B cell (primary cell): ENCODE measurements at regions of chr9 and their contacts with region 1.

Region 1: GRCh38 chr9:68779558-68780384 is 74.7 kb downstream of the PIP5K1B start:
- DNase-seq: peak; percentile 98
- ATAC-seq: peak; percentile 91
- H3K4me3 ChIP-seq: peak overlapping the region; percentile 61 to 92 (median 87)
- H3K4me3 Mint-ChIP-seq: no peak overlapping the region
- H3K27ac ChIP-seq: peak overlapping the region; percentile 91 to 95
- H3K27ac Mint-ChIP-seq: no peak overlapping the region
- H3K4me1 ChIP-seq: peaks cover 29 to 43% of the 10 kb centered on the region in 2 donors
- H3K4me1 Mint-ChIP-seq: peaks cover 9% of the 10 kb centered on the region
- H3K27me3 ChIP-seq: no peaks in the 10 kb centered on the region
- H3K27me3 Mint-ChIP-seq: no peaks in the 10 kb centered on the region
- CTCF ChIP-seq: peak; percentile 66

Region 2: GRCh38 chr9:68546596-68547390 is 233.0 kb before region 1 on chr9:
- CTCF ChIA-PET with region 1: no interaction called
- POLR2A ChIA-PET with region 1: no interaction called
- intact Hi-C with region 1: no loop called
- DNase-seq: peak; percentile 67
- ATAC-seq: peak; percentile 82
- H3K4me3 ChIP-seq: peak overlapping the region in 4 of 5 experiments; percentile 10 to 47 (median 16)
- H3K4me3 Mint-ChIP-seq: peak overlapping the region; percentile 76
- H3K27ac ChIP-seq: peak overlapping the region; percentile 56 to 72
- H3K27ac Mint-ChIP-seq: peak overlapping the region; percentile 80
- H3K4me1 ChIP-seq: peaks cover 30% of the 10 kb centered on the region in 2 donors
- H3K4me1 Mint-ChIP-seq: peaks cover 42% of the 10 kb centered on the region
- H3K27me3 ChIP-seq: no peaks in the 10 kb centered on the region
- H3K27me3 Mint-ChIP-seq: no peaks in the 10 kb centered on the region
- CTCF ChIP-seq: no peak

Region 3: DNA sequence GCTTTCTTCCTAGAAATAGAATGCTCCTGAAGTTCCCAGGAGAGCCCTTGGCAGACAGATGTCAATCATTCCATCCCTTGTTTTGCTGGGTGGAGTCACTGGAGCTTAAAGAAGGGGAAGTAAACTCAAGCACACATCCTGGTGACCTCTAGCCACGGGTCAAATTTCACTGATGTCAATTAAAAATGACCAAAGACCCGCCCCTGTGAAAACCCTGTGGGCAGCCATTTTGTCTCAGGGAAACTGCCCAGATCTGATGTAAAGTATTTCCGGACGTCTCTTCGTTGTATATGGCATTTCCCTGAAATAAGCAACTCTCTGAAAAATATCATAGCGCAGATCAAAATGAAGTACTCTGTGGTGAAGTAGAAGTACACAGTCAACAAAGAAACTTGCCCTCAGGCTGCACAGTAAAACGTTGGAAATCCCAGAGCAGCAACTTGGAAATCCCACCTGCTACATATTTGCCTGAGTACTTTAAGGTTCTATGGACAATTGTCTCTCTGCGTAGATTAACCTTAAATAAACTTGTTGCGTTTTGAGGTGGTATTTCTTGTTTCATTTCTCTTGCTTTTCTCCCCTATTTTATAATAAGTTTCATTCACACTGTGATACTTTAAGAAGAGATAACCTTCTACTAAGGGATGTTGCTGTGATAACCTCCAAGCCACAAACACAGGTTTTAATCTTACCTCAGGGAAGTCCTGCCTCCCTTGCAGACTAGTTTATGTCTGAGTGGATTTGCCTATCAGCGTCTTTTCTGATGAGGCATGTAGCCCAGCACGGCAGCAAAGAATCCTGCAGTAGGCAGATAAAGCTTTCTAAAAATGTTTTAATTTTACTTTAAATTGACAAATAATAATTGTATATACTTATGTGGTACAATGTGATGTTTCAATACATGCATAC is 135.6 kb before region 1 on chr9:
- CTCF ChIA-PET with region 1: interaction called, 5 read pairs
- POLR2A ChIA-PET with region 1: interaction called, 4 read pairs
- intact Hi-C with region 1: loop called (anchors 2 kb)
- DNase-seq: peak; percentile 83
- ATAC-seq: peak; percentile 61
- H3K4me3 ChIP-seq: peak overlapping the region in 1 of 5 experiments; percentile 42
- H3K4me3 Mint-ChIP-seq: peak overlapping the region; percentile 70
- H3K27ac ChIP-seq: peak overlapping the region; percentile 91 to 97
- H3K27ac Mint-ChIP-seq: peak overlapping the region; percentile 91
- H3K4me1 ChIP-seq: peaks cover 83 to 91% of the 10 kb centered on the region in 2 donors
- H3K4me1 Mint-ChIP-seq: peaks cover 89% of the 10 kb centered on the region
- H3K27me3 ChIP-seq: no peaks in the 10 kb centered on the region
- H3K27me3 Mint-ChIP-seq: no peaks in the 10 kb centered on the region
- CTCF ChIP-seq: no peak

Region 4: DNA sequence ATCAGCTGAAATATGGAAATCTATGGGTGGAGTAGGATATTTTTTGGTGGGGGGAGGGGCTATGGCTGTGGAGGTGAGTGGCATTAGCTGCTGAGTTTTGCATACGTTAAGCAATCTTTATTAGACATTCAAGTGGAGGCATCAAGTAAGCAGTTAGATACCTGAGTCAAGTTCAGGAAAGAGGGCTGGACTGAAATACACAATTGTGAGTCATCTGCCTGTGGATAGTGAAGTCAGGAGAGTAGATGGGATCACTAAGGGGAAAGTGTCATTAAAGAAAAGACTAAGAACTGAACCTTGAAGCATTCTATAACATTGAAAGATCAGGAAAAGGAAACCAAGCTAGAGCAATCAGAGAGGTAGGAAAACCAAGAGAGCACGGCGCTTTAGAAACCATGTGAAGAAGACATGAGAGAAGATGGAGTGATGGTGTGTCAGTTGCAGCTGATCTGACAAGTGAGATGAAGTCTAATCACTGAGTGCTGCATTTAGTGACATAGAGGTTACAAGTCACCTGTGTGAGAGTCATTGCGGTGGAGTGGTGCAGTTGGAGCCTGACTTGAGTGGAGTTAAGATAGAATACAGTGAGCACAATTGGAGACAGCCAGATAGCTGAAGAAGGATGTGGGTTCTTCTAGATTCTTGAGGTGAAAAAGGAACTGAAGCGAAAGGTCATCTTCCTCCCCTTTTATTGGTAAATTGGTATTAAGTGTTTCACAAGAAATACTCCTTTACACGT is 14.0 kb after region 1 on chr9:
- CTCF ChIA-PET with region 1: interaction called, 5 read pairs
- POLR2A ChIA-PET with region 1: no interaction called
- intact Hi-C with region 1: loop called (anchors 2 kb)
- DNase-seq: peak; percentile 30
- ATAC-seq: peak; percentile 67
- H3K4me3 ChIP-seq: no peak overlapping the region
- H3K4me3 Mint-ChIP-seq: no peak overlapping the region
- H3K27ac ChIP-seq: peak overlapping the region in 1 of 2 donors; percentile 6
- H3K27ac Mint-ChIP-seq: no peak overlapping the region
- H3K4me1 ChIP-seq: peaks cover 21 to 34% of the 10 kb centered on the region in 2 donors
- H3K4me1 Mint-ChIP-seq: peaks cover 26% of the 10 kb centered on the region
- H3K27me3 ChIP-seq: no peaks in the 10 kb centered on the region
- H3K27me3 Mint-ChIP-seq: no peaks in the 10 kb centered on the region
- CTCF ChIP-seq: no peak

Region 5: DNA sequence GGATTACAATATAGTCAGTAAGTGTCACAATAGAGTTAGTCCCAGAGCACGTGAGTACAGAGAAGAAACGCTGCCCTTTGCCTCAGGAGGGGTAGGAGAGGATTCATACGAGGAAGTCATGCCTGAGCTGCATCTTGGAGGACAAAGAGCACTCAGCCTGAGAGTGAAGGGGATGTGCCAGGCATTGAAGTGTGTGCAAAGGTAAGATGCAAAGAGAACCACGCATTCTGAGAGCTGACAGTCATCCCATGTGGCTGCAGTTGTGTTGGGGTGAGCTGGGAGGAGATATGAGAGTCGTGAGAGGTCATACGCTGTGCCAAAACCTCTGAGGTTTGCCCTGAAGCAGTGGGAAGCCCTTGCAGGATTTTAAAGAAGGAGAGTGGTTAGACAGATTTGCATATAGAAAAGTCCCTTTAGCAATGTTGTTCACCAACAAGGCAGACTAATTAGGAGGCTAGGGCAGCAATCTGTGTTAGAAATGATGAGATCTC is 22.8 kb after region 1 on chr9:
- CTCF ChIA-PET with region 1: interaction called, 5 read pairs
- POLR2A ChIA-PET with region 1: no interaction called
- intact Hi-C with region 1: loop called (anchors 1 kb)
- DNase-seq: peak; percentile 72
- ATAC-seq: peak; percentile 94
- H3K4me3 ChIP-seq: peak overlapping the region in 3 of 5 experiments; percentile 23 to 36 (median 26)
- H3K4me3 Mint-ChIP-seq: no peak overlapping the region
- H3K27ac ChIP-seq: peak overlapping the region in 1 of 2 donors; percentile 37
- H3K27ac Mint-ChIP-seq: no peak overlapping the region
- H3K4me1 ChIP-seq: peaks cover 46 to 55% of the 10 kb centered on the region in 2 donors
- H3K4me1 Mint-ChIP-seq: peaks cover 47% of the 10 kb centered on the region
- H3K27me3 ChIP-seq: no peaks in the 10 kb centered on the region
- H3K27me3 Mint-ChIP-seq: no peaks in the 10 kb centered on the region
- CTCF ChIP-seq: no peak

Region 6: GRCh38 chr9:68861436-68861835 is 81.7 kb after region 1 on chr9:
- CTCF ChIA-PET with region 1: no interaction called
- POLR2A ChIA-PET with region 1: no interaction called
- intact Hi-C with region 1: no loop called
- DNase-seq: no peak
- ATAC-seq: no peak
- H3K4me3 ChIP-seq: no peak overlapping the region
- H3K4me3 Mint-ChIP-seq: no peak overlapping the region
- H3K27ac ChIP-seq: no peak overlapping the region
- H3K27ac Mint-ChIP-seq: no peak overlapping the region
- H3K4me1 ChIP-seq: no peaks in the 10 kb centered on the region
- H3K4me1 Mint-ChIP-seq: no peaks in the 10 kb centered on the region
- H3K27me3 ChIP-seq: no peaks in the 10 kb centered on the region
- H3K27me3 Mint-ChIP-seq: no peaks in the 10 kb centered on the region
- CTCF ChIP-seq: no peak

Region 7: GRCh38 chr9:68895741-68896478 is 116.1 kb after region 1 on chr9:
- CTCF ChIA-PET with region 1: no interaction called
- POLR2A ChIA-PET with region 1: interaction called, 5 read pairs
- intact Hi-C with region 1: loop called (anchors 5 kb)
- DNase-seq: peak; percentile 37
- ATAC-seq: peak; percentile 93
- H3K4me3 ChIP-seq: peak overlapping the region in 3 of 5 experiments; percentile 3 to 55 (median 28)
- H3K4me3 Mint-ChIP-seq: peak overlapping the region; percentile 74
- H3K27ac ChIP-seq: peak overlapping the region; percentile 39 to 68
- H3K27ac Mint-ChIP-seq: peak overlapping the region; percentile 86
- H3K4me1 ChIP-seq: peaks cover 31 to 39% of the 10 kb centered on the region in 2 donors
- H3K4me1 Mint-ChIP-seq: peaks cover 60% of the 10 kb centered on the region
- H3K27me3 ChIP-seq: no peaks in the 10 kb centered on the region
- H3K27me3 Mint-ChIP-seq: no peaks in the 10 kb centered on the region
- CTCF ChIP-seq: no peak